Pancreas (tissue), 10 donors: ENCODE measurements at regions of chr19 and their contacts with region 1.

Region 1: GRCh38 chr19:52139252-52140031 is at the start of gene ZNF616:
- DNase-seq: peak; percentile 84 to 99 (median 98)
- ATAC-seq: peak; percentile 96 to 99 (median 98)
- H3K4me3 ChIP-seq: peak within 1 kb of the TSS; percentile 65 to 87 (median 74)
- H3K27ac ChIP-seq: peak within 1 kb of the TSS; percentile 85 to 97 (median 95)
- H3K4me1 ChIP-seq: peaks cover 6 to 11% (median 7%) of the 10 kb centered on the region in 3 donors
- H3K27me3 ChIP-seq: no peaks in the 10 kb centered on the region
- CTCF ChIP-seq: peak; percentile 38 to 63 (median 59)
- total RNA-seq, gene ZNF616: 3.9 to 9.1 (median 5.5) TPM

Region 2: DNA sequence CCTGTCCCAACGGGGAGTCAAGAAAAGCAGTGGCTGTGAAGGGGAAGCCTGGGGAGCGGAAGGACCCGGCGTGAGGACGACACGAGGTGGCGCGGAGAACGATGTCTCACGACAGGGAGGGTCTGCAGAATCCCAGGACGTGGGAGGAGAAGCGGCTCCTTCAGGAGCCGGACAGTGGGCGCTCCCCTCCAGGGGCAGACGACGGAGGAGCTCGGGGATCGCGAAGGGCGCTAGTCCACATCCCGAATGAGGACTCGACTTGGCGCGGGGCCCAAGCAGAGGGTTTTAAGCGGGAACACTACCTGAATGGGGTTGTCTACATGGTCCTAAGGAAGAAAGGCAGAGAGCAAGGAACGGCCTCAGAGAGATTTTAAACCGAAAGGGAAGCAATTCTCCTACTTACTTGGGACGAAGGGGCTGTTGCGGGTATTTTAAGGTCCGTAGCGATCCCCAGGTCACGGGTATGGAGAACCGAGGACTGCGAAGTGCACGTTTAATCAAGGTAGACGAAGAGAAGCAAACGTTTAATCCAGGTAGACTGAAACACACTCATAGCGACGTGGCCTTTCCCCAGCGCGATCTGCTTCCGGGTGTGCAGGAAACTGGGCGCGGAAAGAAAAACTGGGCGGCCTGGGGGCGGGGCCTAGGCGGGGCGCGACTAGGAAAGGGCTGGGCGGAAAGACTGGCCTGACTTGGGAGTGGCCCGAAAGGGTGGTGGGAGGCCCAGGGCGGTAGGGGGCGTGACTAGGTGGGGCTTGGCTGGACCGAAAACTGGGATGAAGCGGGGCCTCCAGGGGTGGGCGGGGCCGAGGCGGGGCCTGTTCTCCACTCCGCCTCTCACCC is 44.0 kb before region 1 on chr19 and contains the start of gene ZNF841:
- intact Hi-C with region 1: no loop called
- DNase-seq: peak; percentile 94 to 97 (median 96)
- ATAC-seq: peak; percentile 98 to 99 (median 99)
- H3K4me3 ChIP-seq: peak within 1 kb of the TSS; percentile 68 to 88 (median 76)
- H3K27ac ChIP-seq: peak within 1 kb of the TSS; percentile 61 to 71 (median 68)
- H3K4me1 ChIP-seq: peaks cover 0 to 4% (median 0%) of the 10 kb centered on the region in 3 donors
- H3K27me3 ChIP-seq: no peaks in the 10 kb centered on the region
- CTCF ChIP-seq: no peak
- total RNA-seq, gene ZNF841: 7.6 to 20.2 (median 11.7) TPM

Region 3: DNA sequence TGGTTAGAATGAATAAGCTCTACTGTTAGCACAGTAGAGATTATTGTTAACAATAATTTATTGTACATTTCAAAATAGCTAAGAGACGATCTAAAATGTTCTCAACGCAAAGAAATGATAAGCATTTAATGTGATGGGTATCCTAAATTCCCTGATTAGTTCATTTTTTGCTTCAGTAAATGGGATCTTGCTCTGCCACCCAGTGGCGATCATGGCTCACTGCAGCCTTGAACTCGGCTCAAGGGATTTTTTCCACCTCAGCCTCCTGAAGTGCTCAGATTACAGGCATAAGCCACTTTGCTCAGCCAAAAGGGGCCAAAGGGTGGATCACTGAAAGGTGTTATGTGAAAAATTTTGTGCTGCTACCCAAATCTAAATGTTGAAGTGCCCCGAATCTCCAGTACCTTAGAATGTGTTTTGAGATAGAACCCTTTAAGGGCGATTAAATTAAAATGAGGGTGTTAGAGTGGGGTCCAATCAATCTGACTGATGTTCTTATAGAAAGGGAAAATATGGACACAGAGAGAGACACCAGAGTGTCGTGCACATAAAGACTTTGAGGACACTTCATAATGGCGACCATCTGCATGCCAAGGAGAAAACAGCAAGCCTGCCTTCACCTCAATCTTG is 98.4 kb after region 1 on chr19:
- intact Hi-C with region 1: loop called in 2 of 3 experiments (anchors 5 to 10 kb)
- DNase-seq: peak in 5 of 6 donors; percentile 16 to 69 (median 42)
- ATAC-seq: peak; percentile 73 to 98 (median 91)
- H3K4me3 ChIP-seq: no peak overlapping the region
- H3K27ac ChIP-seq: no peak overlapping the region
- H3K4me1 ChIP-seq: no peaks in the 10 kb centered on the region
- H3K27me3 ChIP-seq: no peaks in the 10 kb centered on the region
- CTCF ChIP-seq: peak; percentile 64 to 84 (median 80)

Region 4: GRCh38 chr19:52248241-52248640 is 108.8 kb after region 1 on chr19:
- intact Hi-C with region 1: loop called in 1 of 3 experiments (anchors 10 kb)
- DNase-seq: peak in 4 of 6 donors; percentile 37 to 61 (median 47)
- ATAC-seq: peak in 3 of 4 donors; percentile 82 to 91 (median 88)
- H3K4me3 ChIP-seq: no peak overlapping the region
- H3K27ac ChIP-seq: no peak overlapping the region
- H3K4me1 ChIP-seq: no peaks in the 10 kb centered on the region
- H3K27me3 ChIP-seq: no peaks in the 10 kb centered on the region
- CTCF ChIP-seq: peak in 2 of 4 donors; percentile 28 to 44

Region 5: GRCh38 chr19:52336117-52336790 is 196.8 kb after region 1 on chr19 and contains the start of gene ZNF610:
- intact Hi-C with region 1: no loop called
- DNase-seq: peak; percentile 74 to 92 (median 87)
- ATAC-seq: peak; percentile 97 to 100 (median 100)
- H3K4me3 ChIP-seq: peak within 1 kb of the TSS; percentile 41 to 65 (median 62)
- H3K27ac ChIP-seq: peak within 1 kb of the TSS; percentile 36 to 56 (median 50)
- H3K4me1 ChIP-seq: no peaks in the 10 kb centered on the region
- H3K27me3 ChIP-seq: no peaks in the 10 kb centered on the region
- CTCF ChIP-seq: no peak
- total RNA-seq, gene ZNF610: 0.44 to 3.0 (median 0.88) TPM